Sigmoid colon (tissue), 7 donors: ENCODE measurements at regions of chr12 and their contacts with region 1.

Region 1: GRCh38 chr12:22083167-22083566 is 37.1 kb downstream of the CMAS start:
- DNase-seq: no peak
- H3K4me3 ChIP-seq: no peak overlapping the region
- H3K27ac ChIP-seq: no peak overlapping the region
- H3K4me1 ChIP-seq: no peaks in the 10 kb centered on the region
- H3K27me3 ChIP-seq: no peaks in the 10 kb centered on the region
- CTCF ChIP-seq: peak in 3 of 4 experiments; percentile 33 to 50 (median 48)
- EP300 ChIP-seq: no peak
- POLR2A ChIP-seq: no peak

Region 2: DNA sequence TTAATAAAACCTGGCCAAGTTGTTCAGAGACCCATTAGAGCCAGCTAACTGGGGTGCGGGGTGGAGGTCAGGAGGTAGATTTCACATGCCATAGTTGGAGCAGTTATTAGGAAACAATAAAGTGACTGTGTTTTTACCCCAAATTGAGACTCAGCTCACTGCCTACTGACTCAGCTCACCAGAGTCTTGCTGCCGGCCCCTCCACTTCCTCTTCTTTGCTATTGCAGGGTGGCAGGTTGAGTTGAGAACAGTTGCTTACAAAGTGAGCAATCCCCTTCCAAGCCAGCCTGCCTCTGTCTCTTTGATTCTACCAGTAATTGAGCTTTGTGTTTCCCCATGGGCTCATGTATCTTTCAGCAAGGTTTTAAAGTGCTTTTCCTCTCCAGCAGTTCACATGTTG is 238.5 kb after region 1 on chr12:
- intact Hi-C with region 1: no loop called
- DNase-seq: no peak
- H3K4me3 ChIP-seq: no peak overlapping the region
- H3K27ac ChIP-seq: peak overlapping the region in 2 of 4 donors; percentile 1 to 37
- H3K4me1 ChIP-seq: peaks cover 0 to 17% (median 13%) of the 10 kb centered on the region in 4 donors
- H3K27me3 ChIP-seq: no peaks in the 10 kb centered on the region
- CTCF ChIP-seq: no peak
- EP300 ChIP-seq: no peak
- POLR2A ChIP-seq: no peak

Region 3: DNA sequence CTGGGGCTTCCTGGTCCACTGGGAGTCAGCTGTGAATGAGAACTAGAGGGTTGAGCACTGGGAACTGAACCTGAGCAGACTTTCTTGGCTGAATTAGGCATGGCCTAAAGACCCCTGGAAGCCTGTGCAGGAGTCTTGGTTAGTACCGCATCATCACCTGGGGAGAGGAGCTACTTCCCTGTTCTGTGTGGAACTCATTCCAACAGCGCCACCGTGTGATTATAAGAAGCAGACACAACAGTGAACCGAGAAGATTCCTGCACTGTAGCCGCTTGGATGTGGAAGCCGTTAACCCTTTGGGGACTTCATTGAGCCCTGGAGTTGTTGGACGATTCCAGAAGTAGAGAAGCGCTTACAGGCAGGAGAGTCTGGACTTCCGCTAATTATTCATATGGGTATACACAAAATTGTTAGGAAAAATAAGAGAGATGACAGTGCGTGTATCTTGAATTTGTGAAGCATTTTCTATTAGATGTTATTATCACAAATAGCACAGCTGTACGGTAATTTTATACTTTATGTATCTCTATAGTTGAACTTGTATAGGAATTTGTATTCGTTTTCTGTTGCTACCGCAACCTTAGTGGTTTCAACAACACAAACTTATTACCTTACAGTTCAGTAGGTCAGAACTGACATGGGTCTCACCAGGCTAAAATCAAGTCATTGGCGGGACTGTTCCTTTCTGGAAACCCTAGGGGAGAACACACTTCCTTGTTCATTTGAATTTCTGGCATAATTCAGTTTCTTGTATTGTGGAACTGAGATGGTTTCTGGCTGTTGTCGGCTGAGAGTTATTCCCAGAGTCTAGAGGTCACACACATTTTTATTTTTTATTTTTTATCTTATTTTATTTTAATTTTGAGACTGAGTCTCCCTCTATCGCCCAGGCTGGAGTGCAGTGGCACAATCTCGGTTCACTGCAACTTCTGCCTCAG is 360.5 kb after region 1 on chr12:
- intact Hi-C with region 1: loop called (anchors 2 kb)
- DNase-seq: peak; percentile 78
- H3K4me3 ChIP-seq: no peak overlapping the region
- H3K27ac ChIP-seq: no peak overlapping the region
- H3K4me1 ChIP-seq: peaks cover 0 to 11% (median 3%) of the 10 kb centered on the region in 4 donors
- H3K27me3 ChIP-seq: no peaks in the 10 kb centered on the region
- CTCF ChIP-seq: peak; percentile 62 to 73 (median 66)
- EP300 ChIP-seq: no peak
- POLR2A ChIP-seq: no peak

Region 4: DNA sequence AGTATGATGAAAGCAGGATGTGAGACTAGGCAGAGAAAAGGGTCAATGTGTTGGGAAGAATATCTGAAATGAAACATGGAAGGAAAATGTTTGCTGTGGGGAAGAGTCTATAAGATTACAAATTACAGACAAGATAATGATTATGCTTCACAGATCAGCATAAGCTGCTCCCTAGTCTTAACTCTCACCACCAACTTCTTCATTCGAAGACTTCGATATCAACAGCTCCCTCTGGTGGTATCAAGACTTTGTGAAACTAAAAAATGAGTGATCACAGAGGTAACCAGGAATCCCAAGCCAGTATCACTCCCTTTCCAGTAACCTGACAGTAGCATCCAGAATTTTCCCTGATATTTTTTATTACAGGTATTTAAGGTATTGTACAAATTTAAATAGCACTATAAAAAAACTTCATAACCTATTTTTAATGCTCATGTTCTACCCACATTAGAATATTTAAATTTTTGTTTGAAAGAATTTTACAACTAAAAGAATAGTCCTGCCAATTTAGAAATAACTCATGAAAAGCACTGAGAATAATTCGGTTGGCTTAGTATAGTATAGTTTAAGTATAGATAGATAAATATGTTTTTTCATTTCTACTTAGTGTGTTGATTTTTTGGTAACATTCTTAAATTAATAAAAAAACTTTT is 376.8 kb after region 1 on chr12:
- intact Hi-C with region 1: loop called (anchors 5 kb)
- DNase-seq: no peak
- H3K4me3 ChIP-seq: no peak overlapping the region
- H3K27ac ChIP-seq: no peak overlapping the region
- H3K4me1 ChIP-seq: peaks cover 0 to 4% (median 0%) of the 10 kb centered on the region in 4 donors
- H3K27me3 ChIP-seq: no peaks in the 10 kb centered on the region
- CTCF ChIP-seq: peak; percentile 13 to 59 (median 32)
- EP300 ChIP-seq: no peak
- POLR2A ChIP-seq: no peak